ENCODE measurements at regions of chrX and their contacts with region 1.

Region 1: DNA sequence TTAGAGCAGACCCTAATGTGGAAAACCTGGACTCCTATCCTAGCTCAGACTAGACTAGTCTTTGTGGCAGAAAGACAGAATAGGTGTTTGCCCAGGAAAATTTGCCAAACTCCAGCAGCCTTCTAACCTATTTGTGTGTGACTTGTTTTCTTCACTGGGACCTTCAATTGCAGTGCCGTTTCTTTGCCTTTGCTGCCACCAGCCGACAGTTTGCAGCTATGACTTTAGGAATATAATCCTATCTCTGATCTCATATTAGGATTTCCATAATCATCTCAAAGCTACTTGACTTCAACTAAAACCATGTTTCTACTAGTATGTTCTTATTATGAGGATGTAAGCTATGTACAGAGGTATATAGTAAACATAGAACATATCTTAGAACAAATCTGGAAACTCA is 60.2 kb upstream of the PGAM4 start:
- DNase-seq: peak in 1 of 2 donors; percentile 12
- ATAC-seq: peak; percentile 64

Region 2: GRCh38 chrX:77900688-77901087 is 129.0 kb before region 1 on chrX:
- intact Hi-C with region 1: loop called in 1 of 2 experiments (anchors 10 kb)
- DNase-seq: no peak
- ATAC-seq: no peak

Region 3: GRCh38 chrX:78333521-78333920 is 303.9 kb after region 1 on chrX:
- intact Hi-C with region 1: no loop called
- DNase-seq: no peak
- ATAC-seq: no peak

Measured in left colon (tissue), 2 donors.